Naive thymus-derived CD4-positive, alpha-beta T cell (primary cell): ENCODE measurements at regions of chr5 and their contacts with region 1.

Region 1: DNA sequence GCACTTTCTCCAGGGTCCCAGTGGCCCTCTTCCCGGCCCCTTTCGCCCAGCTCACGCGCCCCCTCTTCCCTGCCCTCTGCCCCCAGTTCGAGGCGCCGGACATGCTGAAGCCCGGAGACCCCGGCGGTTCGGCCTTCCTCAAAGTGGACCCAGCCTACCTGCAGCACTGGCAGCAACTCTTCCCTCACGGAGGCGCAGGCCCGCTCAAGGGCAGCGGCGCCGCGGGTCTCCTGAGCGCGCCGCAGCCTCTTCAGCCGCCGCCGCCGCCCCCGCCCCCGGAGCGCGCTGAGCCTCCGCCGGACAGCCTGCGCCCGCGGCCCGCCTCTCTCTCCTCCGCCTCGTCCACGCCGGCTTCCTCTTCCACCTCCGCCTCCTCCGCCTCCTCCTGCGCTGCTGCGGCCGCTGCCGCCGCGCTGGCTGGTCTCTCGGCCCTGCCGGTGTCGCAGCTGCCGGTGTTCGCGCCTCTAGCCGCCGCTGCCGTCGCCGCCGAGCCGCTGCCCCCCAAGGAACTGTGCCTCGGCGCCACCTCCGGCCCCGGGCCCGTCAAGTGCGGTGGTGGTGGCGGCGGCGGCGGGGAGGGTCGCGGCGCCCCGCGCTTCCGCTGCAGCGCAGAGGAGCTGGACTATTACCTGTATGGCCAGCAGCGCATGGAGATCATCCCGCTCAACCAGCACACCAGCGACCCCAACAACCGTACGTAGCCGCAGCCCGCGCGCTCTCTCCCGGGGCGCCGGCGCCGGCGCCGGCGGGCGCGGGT is 1.1 kb downstream of the PRDM6 start:
- DNase-seq: no peak
- ATAC-seq: no peak
- H3K4me3 ChIP-seq: no peak overlapping the region
- H3K4me3 Mint-ChIP-seq: peak overlapping the region in 1 of 10 donors; percentile 78
- H3K27ac ChIP-seq: no peak overlapping the region
- H3K27ac Mint-ChIP-seq: no peak overlapping the region
- H3K4me1 ChIP-seq: no peaks in the 10 kb centered on the region
- H3K4me1 Mint-ChIP-seq: peaks cover 14 to 41% (median 27%) of the 10 kb centered on the region in 7 donors
- H3K27me3 ChIP-seq: no peaks in the 10 kb centered on the region
- H3K27me3 Mint-ChIP-seq: peaks cover 70 to 81% (median 72%) of the 10 kb centered on the region in 5 donors

Region 2: DNA sequence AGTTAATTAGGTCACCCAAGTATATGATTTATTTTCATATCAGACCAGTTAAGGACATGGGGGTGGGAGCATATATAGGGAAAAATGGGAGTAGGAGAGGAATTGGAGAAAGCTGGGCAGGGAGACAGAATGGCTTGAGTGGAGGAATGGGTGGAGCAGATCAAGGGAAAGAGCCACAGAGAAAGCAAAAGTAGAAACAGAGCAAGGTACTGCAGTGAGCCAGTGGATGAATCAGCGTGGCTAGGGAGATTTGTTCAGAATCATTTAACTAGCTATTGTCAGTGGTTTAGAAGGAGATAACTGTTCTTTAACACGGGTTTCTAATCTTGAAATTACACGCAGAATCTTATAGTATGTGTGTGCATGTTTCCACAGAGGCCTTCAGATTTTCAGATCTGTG is 207.3 kb before region 1 on chr5:
- CTCF ChIA-PET with region 1: no interaction called
- POLR2A ChIA-PET with region 1: no interaction called
- intact Hi-C with region 1: no loop called
- DNase-seq: no peak
- ATAC-seq: no peak
- H3K4me3 ChIP-seq: no peak overlapping the region
- H3K4me3 Mint-ChIP-seq: peak overlapping the region in 1 of 10 donors; percentile 57
- H3K27ac ChIP-seq: no peak overlapping the region
- H3K27ac Mint-ChIP-seq: no peak overlapping the region
- H3K4me1 ChIP-seq: no peaks in the 10 kb centered on the region
- H3K4me1 Mint-ChIP-seq: peaks cover 0 to 3% (median 0%) of the 10 kb centered on the region in 7 donors
- H3K27me3 ChIP-seq: no peaks in the 10 kb centered on the region
- H3K27me3 Mint-ChIP-seq: peaks cover 0 to 2% (median 0%) of the 10 kb centered on the region in 5 donors

Region 3: DNA sequence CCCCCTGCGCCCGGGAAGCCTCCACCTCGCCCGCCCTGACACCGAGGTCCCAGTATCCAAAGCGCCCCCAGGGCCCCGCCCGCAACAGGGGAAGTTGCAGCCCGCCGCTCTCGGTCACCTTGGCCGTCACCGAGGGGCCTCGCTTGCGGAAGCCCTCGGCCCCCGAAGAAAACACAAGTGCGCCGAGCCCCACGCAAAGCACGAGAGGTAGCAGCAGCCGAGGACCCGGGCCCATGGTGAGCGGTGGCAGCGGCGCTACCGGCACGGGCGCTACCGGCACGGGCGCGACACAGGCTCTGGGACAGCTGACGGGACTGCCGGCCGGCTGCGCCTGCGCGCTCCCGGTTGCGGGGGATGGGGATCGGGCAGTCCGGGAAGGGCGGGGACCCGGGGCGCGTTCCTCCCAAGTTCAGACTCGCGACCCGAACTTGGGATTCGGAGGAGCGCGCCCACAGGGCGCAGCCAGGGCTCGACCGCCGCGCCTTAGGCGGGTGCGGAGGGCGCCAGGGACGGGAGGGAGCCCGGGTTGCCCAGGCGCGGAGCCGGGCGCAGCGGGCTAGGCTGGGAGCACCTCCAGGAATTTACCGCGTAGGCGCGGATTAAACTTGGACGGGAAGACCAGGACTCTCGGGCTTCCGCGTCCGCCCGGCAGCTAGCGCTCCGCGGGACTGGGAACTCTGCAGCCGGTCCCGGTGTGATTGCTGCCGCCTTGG is 53.5 kb before region 1 on chr5 and contains the start of gene PPIC:
- CTCF ChIA-PET with region 1: no interaction called
- POLR2A ChIA-PET with region 1: no interaction called
- intact Hi-C with region 1: loop called in 1 of 2 experiments (anchors 5 kb)
- DNase-seq: peak in 2 of 9 donors; percentile 4 to 27
- ATAC-seq: peak; percentile 14
- H3K4me3 ChIP-seq: no peak within 1 kb of the TSS
- H3K4me3 Mint-ChIP-seq: peak within 1 kb of the TSS; percentile 11 to 74 (median 62)
- H3K27ac ChIP-seq: no peak within 1 kb of the TSS
- H3K27ac Mint-ChIP-seq: no peak within 1 kb of the TSS
- H3K4me1 ChIP-seq: peaks cover 0 to 5% of the 10 kb centered on the region in 2 donors
- H3K4me1 Mint-ChIP-seq: peaks cover 0 to 17% (median 9%) of the 10 kb centered on the region in 7 donors
- H3K27me3 ChIP-seq: no peaks in the 10 kb centered on the region
- H3K27me3 Mint-ChIP-seq: peaks cover 57 to 82% (median 66%) of the 10 kb centered on the region in 5 donors
- total RNA-seq, gene PPIC: not detected

Region 4: DNA sequence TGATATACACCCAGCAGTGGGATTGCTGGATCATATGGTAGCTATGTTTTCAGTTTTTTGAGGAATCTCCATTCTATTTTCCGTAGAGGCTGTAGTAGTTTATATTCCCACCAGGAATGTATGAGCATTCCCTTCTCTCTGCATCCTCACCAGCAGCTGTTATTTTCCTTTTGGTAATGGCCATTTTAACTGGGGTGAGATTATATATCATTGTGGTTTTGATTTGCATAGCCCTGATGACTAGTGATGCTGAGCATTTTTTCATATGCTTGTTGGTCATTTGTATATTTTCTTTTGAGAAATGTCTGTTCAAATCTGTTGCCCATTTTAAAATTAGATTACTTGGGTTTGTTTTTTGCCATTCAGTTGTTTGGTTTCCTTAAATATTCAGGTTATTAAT is 42.4 kb before region 1 on chr5:
- CTCF ChIA-PET with region 1: no interaction called
- POLR2A ChIA-PET with region 1: no interaction called
- intact Hi-C with region 1: no loop called
- DNase-seq: no peak
- ATAC-seq: no peak
- H3K4me3 ChIP-seq: no peak overlapping the region
- H3K4me3 Mint-ChIP-seq: no peak overlapping the region
- H3K27ac ChIP-seq: no peak overlapping the region
- H3K27ac Mint-ChIP-seq: no peak overlapping the region
- H3K4me1 ChIP-seq: no peaks in the 10 kb centered on the region
- H3K4me1 Mint-ChIP-seq: no peaks in the 10 kb centered on the region
- H3K27me3 ChIP-seq: no peaks in the 10 kb centered on the region
- H3K27me3 Mint-ChIP-seq: peaks cover 25 to 59% (median 45%) of the 10 kb centered on the region in 5 donors